Dorsolateral prefrontal cortex (tissue), 120 donors: ENCODE measurements at regions of chr22 and their contacts with region 1.

Region 1: DNA sequence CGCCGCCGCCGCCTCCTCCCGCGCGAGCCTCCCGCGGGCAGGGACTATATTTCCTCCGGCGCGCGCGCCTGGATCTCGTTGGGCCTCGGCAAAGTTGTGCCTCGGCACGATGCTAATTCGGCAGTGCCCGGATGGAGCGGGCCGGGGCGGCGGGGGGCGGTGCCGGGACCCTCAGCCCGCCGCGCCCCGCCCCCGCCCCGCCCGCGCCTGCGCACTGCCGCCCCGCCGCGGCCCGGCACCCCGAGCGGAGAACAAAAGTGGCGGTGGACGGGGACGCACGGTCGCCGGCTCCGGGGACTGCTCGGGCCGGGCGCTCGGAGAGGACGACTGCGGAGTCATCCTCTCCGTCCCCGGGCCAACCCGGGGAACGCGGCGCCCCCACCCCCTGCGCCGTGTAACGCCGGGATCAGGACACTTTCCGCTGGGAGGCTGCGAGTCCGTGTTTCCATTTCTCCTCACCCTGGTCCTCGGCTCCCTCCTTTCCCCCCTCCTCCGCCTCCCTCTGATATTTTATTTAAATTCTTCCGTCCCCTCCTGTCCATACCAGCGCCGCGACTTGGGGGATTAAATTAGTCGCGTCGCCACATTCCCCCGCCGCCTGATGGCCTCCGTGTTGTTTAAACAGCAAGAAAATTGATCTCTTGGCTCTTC is at the start of gene PHF21B:
- DNase-seq: peak in 8 of 10 donors; percentile 18 to 80 (median 71)
- H3K4me3 ChIP-seq: peak within 1 kb of the TSS; percentile 44 to 80 (median 68)
- H3K27ac ChIP-seq: peak within 1 kb of the TSS in 53 of 59 donors; percentile 2 to 91 (median 73)
- H3K27me3 ChIP-seq: peaks cover 0 to 22% (median 0%) of the 10 kb centered on the region in 45 donors
- CTCF ChIP-seq: peak in 2 of 56 donors; percentile 2 to 8
- total RNA-seq, gene PHF21B: 5.0 to 39.2 (median 12.3) TPM

Region 2: GRCh38 chr22:44975427-44976262 is 34.4 kb before region 1 on chr22:
- intact Hi-C with region 1: loop called in 1 of 2 experiments (anchors 2 kb)
- DNase-seq: peak; percentile 9 to 70 (median 58)
- H3K4me3 ChIP-seq: no peak overlapping the region
- H3K27ac ChIP-seq: no peak overlapping the region
- H3K27me3 ChIP-seq: peaks cover 0 to 3% (median 0%) of the 10 kb centered on the region in 45 donors
- CTCF ChIP-seq: peak; percentile 34 to 89 (median 74)

Region 3: GRCh38 chr22:45036154-45036553 is 26.1 kb after region 1 on chr22:
- intact Hi-C with region 1: no loop called
- DNase-seq: peak in 6 of 10 donors; percentile 14 to 59 (median 48)
- H3K4me3 ChIP-seq: peak overlapping the region in 2 of 59 donors; percentile 8 to 10
- H3K27ac ChIP-seq: no peak overlapping the region
- H3K27me3 ChIP-seq: peaks cover 0 to 31% (median 9%) of the 10 kb centered on the region in 45 donors
- CTCF ChIP-seq: no peak

Region 4: GRCh38 chr22:45201678-45202332 is 191.8 kb after region 1 on chr22:
- intact Hi-C with region 1: loop called in 1 of 2 experiments (anchors 5 kb)
- DNase-seq: peak in 1 of 10 donors; percentile 29
- H3K4me3 ChIP-seq: no peak overlapping the region
- H3K27ac ChIP-seq: peak overlapping the region in 52 of 59 donors; percentile 2 to 83 (median 50)
- H3K27me3 ChIP-seq: no peaks in the 10 kb centered on the region
- CTCF ChIP-seq: no peak